CD4-positive, alpha-beta memory T cell (primary cell): ENCODE measurements at regions of chr1 and their contacts with region 1.

Region 1: DNA sequence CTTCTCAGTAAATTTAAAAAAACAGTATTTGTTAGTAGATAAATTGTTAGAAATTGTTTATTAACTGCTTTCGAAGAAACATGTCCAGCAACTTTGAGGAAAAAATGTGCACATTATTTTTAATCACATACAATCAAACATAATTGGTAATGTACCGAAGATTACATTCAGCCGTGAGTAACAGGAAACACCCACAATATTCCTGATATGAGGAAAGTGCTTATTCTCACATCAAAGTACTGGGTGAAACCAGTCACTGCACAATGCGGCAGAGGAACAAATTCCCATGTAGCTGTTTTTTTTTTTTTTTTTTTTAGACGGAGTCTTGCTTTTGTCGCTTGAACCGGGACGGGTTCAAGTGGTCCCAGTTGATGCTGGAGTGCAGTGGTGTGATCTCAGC is 9.7 kb downstream of the ACBD3 start:
- DNase-seq: no peak
- H3K4me3 ChIP-seq: no peak overlapping the region
- H3K4me3 Mint-ChIP-seq: no peak overlapping the region
- H3K27ac ChIP-seq: no peak overlapping the region
- H3K27ac Mint-ChIP-seq: no peak overlapping the region
- H3K4me1 ChIP-seq: peaks cover 39% of the 10 kb centered on the region
- H3K4me1 Mint-ChIP-seq: peaks cover 28 to 70% (median 46%) of the 10 kb centered on the region in 4 donors
- H3K27me3 ChIP-seq: no peaks in the 10 kb centered on the region
- H3K27me3 Mint-ChIP-seq: no peaks in the 10 kb centered on the region

Region 2: DNA sequence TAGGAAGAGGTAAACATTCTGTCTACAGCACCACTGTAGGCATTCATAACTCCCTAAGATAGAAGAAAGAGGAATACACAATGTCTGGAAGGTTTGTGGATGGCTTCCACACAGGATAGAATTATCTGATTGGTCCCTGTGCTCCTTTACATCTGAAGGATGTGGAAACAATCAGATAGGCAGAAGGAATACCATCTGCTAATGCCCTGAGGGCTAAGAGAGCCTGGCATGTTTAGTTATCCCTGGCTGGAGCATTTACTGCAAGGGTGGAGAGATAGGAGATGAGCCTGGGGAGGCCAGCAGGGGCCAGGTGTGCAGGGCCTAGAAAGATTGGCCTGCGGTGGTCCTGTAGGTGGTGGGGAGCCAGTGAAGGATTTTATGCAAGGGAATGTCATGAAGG is 18.3 kb after region 1 on chr1:
- CTCF ChIA-PET with region 1: interaction called, 48 read pairs
- POLR2A ChIA-PET with region 1: no interaction called
- intact Hi-C with region 1: no loop called
- DNase-seq: no peak
- H3K4me3 ChIP-seq: no peak overlapping the region
- H3K4me3 Mint-ChIP-seq: no peak overlapping the region
- H3K27ac ChIP-seq: no peak overlapping the region
- H3K27ac Mint-ChIP-seq: peak overlapping the region in 1 of 7 donors; percentile 48
- H3K4me1 ChIP-seq: no peaks in the 10 kb centered on the region
- H3K4me1 Mint-ChIP-seq: peaks cover 0 to 2% (median 0%) of the 10 kb centered on the region in 4 donors
- H3K27me3 ChIP-seq: no peaks in the 10 kb centered on the region
- H3K27me3 Mint-ChIP-seq: peaks cover 0 to 9% of the 10 kb centered on the region in 2 donors

Region 3: GRCh38 chr1:226355669-226356551 is 179.0 kb after region 1 on chr1:
- CTCF ChIA-PET with region 1: no interaction called
- POLR2A ChIA-PET with region 1: no interaction called
- intact Hi-C with region 1: no loop called
- DNase-seq: no peak
- H3K4me3 ChIP-seq: no peak overlapping the region
- H3K4me3 Mint-ChIP-seq: no peak overlapping the region
- H3K27ac ChIP-seq: no peak overlapping the region
- H3K27ac Mint-ChIP-seq: peak overlapping the region in 3 of 7 donors; percentile 27 to 75 (median 68)
- H3K4me1 ChIP-seq: no peaks in the 10 kb centered on the region
- H3K4me1 Mint-ChIP-seq: no peaks in the 10 kb centered on the region
- H3K27me3 ChIP-seq: no peaks in the 10 kb centered on the region
- H3K27me3 Mint-ChIP-seq: no peaks in the 10 kb centered on the region